ENCODE measurements at regions of chr11 and their contacts with region 1.

Region 1: DNA sequence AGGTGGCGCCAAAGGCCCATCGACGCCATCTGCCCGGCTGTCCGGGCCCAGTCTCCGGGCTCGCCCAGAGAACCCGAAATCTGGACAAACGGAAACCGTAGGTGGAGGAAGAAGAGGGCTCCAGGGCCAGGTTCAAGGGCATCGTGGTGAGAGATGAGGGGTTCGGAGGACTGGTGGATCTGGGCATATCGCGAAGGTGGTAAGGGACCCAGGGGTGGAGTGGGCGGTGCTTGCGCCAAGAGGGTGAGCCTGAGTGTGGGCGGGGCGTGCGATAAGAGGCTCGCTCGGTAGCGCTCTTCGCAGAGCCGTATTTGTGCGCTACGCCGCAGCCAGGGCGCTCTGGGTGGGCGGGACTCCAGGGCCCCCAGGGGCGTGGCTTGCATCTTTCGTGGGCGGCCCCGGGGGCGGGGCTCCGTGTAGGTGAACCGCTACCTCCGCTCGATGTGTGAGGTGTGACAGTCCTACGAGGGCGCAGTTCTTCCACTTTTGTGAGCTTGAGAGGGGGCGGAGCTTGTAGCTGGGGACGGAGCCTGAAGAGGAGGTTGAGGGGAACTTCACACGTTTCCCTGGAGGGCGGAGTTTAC is 4.8 kb downstream of the CD248 start:
- DNase-seq: peak; percentile 94
- H3K4me3 ChIP-seq: peak overlapping the region; percentile 35 to 82 (median 79)
- H3K27ac ChIP-seq: peak overlapping the region; percentile 52
- H3K4me1 ChIP-seq: peaks cover 4% of the 10 kb centered on the region
- H3K27me3 ChIP-seq: peaks cover 0 to 5% of the 10 kb centered on the region in 2 experiments
- CTCF ChIP-seq: peak in 1 of 2 donors; percentile 94
- POLR2A ChIP-seq: peak; percentile 9

Region 2: DNA sequence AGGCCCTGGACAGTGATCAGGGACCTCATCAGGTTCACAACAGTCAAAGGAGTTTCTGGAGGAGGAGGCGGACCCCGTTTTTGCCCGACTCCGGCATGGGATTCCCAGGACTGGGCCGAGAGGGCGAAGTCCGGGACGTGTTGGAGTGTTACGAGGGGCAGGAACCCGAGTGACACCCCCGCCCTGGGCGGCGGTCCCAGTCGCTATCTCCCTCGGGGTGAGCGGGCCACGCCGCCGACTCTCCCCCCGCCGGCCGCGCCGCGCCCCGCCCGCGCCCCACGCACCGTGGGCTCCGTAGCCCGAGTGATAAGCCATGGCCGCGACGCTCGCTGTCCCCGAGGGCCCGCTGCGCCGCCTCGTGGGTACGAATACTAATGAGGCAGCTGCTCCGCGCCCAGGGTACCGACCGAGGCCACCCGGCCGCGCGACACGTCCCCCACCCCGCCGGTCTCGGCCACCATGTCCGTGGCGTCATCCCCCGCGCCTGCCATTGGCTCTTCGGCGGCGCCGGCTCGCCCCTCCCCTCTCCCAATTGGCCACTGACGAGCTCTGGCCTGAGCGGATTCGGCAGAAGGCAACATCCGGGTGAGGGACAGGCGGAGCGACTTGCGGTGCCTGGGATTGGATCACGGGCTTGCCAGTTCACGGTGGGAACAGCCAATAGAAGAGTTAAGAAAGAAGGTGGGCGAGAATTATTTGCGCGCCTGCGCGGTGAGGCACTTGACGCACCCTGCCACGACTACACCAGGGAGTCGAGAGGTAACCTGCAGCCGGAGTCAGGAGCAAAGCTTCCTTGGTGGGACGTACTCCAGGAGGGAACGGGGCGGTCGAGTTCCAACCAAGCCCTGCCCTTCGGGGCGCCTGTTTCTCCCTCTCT is 23.1 kb before region 1 on chr11 and contains the start of gene YIF1A:
- CTCF ChIA-PET with region 1: interaction called, 10 read pairs
- POLR2A ChIA-PET with region 1: interaction called, 8 read pairs
- dilution Hi-C with region 1: no loop called
- intact Hi-C with region 1: loop called (anchors 1 kb)
- DNase-seq: peak; percentile 100
- H3K4me3 ChIP-seq: peak within 1 kb of the TSS; percentile 73 to 94 (median 93)
- H3K27ac ChIP-seq: peak within 1 kb of the TSS; percentile 78
- H3K4me1 ChIP-seq: peaks cover 13% of the 10 kb centered on the region
- H3K27me3 ChIP-seq: peaks cover 19 to 20% of the 10 kb centered on the region in 2 experiments
- CTCF ChIP-seq: no peak
- POLR2A ChIP-seq: peak; percentile 88
- total RNA-seq, gene YIF1A: 104 and 123 TPM in 2 replicates

Region 3: DNA sequence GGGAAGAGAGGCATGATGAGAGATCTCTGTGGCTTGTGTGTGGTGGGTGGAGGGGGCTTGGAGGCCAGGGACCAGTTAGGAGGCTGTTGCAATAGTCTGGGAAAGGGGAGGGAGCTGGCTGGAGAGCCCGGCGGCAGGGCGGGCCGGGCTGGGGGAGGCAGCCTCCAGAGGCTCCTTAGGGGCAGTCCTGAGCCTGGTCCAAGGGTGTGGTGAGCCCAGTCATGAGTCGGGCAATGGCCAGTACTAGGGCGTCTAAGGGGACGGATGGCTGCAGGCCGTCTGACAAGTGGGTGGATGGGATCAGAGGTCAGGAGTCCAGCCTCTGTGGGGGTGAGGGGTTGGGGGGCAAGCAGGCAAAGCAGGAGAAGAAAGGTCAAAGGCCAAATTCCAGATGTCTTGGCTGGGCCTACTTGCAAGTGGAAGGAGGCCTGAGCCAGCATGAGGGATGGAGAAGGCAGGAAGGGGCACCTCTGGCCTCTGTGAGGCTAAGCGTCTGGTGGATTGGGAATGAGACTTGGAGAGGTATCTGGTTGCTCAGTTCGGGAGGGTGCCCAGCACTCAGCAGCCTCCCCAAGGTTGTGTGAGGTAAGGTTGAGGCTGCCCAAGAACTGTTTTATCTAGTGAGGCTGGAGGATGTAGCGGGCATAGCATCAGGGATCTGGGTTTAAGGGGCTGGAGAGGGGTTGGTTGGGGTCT is 10.8 kb after region 1 on chr11:
- CTCF ChIA-PET with region 1: interaction called, 56 read pairs
- POLR2A ChIA-PET with region 1: interaction called, 4 read pairs
- dilution Hi-C with region 1: no loop called
- intact Hi-C with region 1: loop called (anchors 1 kb)
- DNase-seq: no peak
- H3K4me3 ChIP-seq: no peak overlapping the region
- H3K27ac ChIP-seq: no peak overlapping the region
- H3K4me1 ChIP-seq: no peaks in the 10 kb centered on the region
- H3K27me3 ChIP-seq: peaks cover 2 to 7% of the 10 kb centered on the region in 2 experiments
- CTCF ChIP-seq: no peak
- POLR2A ChIP-seq: no peak

Region 4: GRCh38 chr11:66336234-66337102 is 24.4 kb after region 1 on chr11 and contains the start of gene RIN1:
- CTCF ChIA-PET with region 1: interaction called, 225 read pairs
- POLR2A ChIA-PET with region 1: interaction called, 3 read pairs
- dilution Hi-C with region 1: no loop called
- intact Hi-C with region 1: loop called (anchors 2 kb)
- DNase-seq: peak; percentile 85
- H3K4me3 ChIP-seq: peak within 1 kb of the TSS; percentile 12 to 54 (median 48)
- H3K27ac ChIP-seq: peak within 1 kb of the TSS; percentile 91
- H3K4me1 ChIP-seq: peaks cover 18% of the 10 kb centered on the region
- H3K27me3 ChIP-seq: no peaks in the 10 kb centered on the region
- CTCF ChIP-seq: peak in 1 of 2 donors; percentile 3
- POLR2A ChIP-seq: peak; percentile 87
- total RNA-seq, gene RIN1: 9.1 and 10.2 TPM in 2 replicates

Region 5: GRCh38 chr11:66386171-66387069 is 74.4 kb after region 1 on chr11:
- CTCF ChIA-PET with region 1: interaction called, 59 read pairs
- POLR2A ChIA-PET with region 1: no interaction called
- dilution Hi-C with region 1: no loop called
- intact Hi-C with region 1: loop called (anchors 1 kb)
- DNase-seq: peak; percentile 77
- H3K4me3 ChIP-seq: no peak overlapping the region
- H3K27ac ChIP-seq: no peak overlapping the region
- H3K4me1 ChIP-seq: peaks cover 3% of the 10 kb centered on the region
- H3K27me3 ChIP-seq: peaks cover 4 to 8% of the 10 kb centered on the region in 2 experiments
- CTCF ChIP-seq: peak; percentile 90 to 97
- POLR2A ChIP-seq: no peak

Measured in endothelial cell of umbilical vein (primary cell).